PC-9 (cell line): ENCODE measurements at regions of chr12 and their contacts with region 1.

Region 1: DNA sequence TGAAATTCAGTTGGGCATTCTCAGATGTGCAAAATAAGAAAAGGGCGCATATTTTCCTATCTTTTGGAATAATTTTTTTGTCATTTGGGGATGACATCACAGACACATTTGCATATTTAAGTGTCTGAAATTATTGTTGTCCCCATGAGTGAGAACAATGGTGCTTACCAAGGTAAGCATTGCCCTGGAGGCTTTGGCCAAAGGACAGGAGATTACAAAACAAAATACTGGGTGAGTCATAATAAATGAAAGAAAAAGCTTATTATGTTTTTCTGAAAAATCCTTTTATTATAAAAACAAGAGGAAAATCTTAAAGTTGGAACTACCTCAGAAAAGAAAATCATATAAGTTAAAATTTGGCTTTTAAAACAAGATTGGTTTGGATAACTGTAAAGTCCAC is 254.9 kb downstream of the BTG1 start:
- DNase-seq: peak; percentile 16 to 65
- H3K4me3 ChIP-seq: no peak overlapping the region
- H3K27ac ChIP-seq: no peak overlapping the region
- H3K4me1 ChIP-seq: peaks cover 39% of the 10 kb centered on the region
- H3K27me3 ChIP-seq: no peaks in the 10 kb centered on the region
- CTCF ChIP-seq: no peak

Region 2: DNA sequence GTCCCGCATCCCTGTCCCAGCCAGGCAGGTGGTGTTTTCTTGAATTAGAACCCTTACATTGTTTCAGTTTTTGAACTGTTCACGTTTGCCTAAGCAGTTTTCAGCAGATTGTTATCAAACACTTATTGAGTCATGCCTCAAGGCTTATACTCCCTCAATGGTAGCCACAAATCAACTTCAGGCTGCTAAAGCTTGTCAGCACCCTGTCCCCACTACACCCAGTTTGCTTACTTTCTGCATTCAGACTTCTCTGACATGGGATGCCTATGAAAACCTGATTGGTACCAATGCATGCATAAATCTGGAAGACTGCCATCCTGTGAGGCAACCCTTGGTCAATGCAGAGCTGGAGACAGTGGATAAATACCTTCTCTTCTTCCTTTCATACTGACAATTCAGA is 29.5 kb after region 1 on chr12:
- CTCF ChIA-PET with region 1: no interaction called
- POLR2A ChIA-PET with region 1: interaction called, 4 read pairs
- intact Hi-C with region 1: loop called (anchors 5 kb)
- DNase-seq: peak in 1 of 2 experiments; percentile 16
- H3K4me3 ChIP-seq: no peak overlapping the region
- H3K27ac ChIP-seq: no peak overlapping the region
- H3K4me1 ChIP-seq: no peaks in the 10 kb centered on the region
- H3K27me3 ChIP-seq: no peaks in the 10 kb centered on the region
- CTCF ChIP-seq: no peak

Region 3: GRCh38 chr12:92136965-92137721 is 246.4 kb after region 1 on chr12:
- CTCF ChIA-PET with region 1: no interaction called
- POLR2A ChIA-PET with region 1: no interaction called
- intact Hi-C with region 1: loop called (anchors 2 kb)
- DNase-seq: peak in 1 of 2 experiments; percentile 84
- H3K4me3 ChIP-seq: peak overlapping the region; percentile 72
- H3K27ac ChIP-seq: peak overlapping the region; percentile 96
- H3K4me1 ChIP-seq: peaks cover 88% of the 10 kb centered on the region
- H3K27me3 ChIP-seq: no peaks in the 10 kb centered on the region
- CTCF ChIP-seq: no peak